ENCODE measurements at regions of chr5 and their contacts with region 1.

Region 1: GRCh38 chr5:151659001-151659754 is 27.5 kb downstream of the SPARC start:
- H3K4me3 ChIP-seq: no peak overlapping the region
- H3K27ac ChIP-seq: no peak overlapping the region
- H3K4me1 ChIP-seq: no peaks in the 10 kb centered on the region
- CTCF ChIP-seq: peak; percentile 76

Region 2: DNA sequence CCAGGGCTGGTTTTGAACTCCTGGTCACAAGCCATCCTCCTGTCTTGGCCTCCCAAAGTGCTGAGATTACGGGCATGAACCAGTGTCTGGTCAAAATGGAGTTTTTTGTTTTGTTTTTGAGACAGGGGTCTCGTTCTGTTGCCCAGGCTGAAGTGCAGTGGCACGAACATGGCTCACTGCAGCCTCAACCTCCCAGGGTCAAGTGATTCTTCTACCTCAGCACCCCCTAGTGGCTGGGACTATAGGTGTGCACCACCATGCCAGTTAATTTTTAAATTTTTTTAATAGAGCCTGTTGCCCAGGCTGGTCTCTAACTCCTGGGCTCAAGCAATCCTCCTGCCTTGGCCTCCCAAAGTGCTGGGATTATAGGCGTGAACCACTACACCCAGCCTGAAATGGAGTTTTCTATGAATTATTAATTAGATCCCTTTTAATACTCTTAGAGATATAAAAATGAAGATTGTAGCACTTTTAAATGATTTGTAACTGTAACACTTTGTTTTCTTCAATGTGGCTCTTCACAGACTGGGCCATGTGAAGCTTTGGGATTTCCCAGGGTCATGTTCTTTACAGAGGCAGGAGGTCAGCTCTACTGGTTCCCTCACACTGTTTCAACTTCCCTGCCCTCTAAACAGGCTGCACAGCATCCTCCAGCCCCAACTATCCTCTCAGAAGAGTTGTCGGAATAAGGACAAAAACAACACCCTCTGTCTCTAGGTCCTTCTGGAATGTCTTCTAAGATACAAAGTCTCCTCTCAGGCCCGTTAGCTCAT is 60.2 kb after region 1 on chr5:
- CTCF ChIA-PET with region 1: interaction called, 103 read pairs
- POLR2A ChIA-PET with region 1: interaction called, 3 read pairs
- H3K4me3 ChIP-seq: no peak overlapping the region
- H3K27ac ChIP-seq: no peak overlapping the region
- H3K4me1 ChIP-seq: no peaks in the 10 kb centered on the region
- CTCF ChIP-seq: peak; percentile 22; the same call in 1 of the 2 replicates

Region 3: DNA sequence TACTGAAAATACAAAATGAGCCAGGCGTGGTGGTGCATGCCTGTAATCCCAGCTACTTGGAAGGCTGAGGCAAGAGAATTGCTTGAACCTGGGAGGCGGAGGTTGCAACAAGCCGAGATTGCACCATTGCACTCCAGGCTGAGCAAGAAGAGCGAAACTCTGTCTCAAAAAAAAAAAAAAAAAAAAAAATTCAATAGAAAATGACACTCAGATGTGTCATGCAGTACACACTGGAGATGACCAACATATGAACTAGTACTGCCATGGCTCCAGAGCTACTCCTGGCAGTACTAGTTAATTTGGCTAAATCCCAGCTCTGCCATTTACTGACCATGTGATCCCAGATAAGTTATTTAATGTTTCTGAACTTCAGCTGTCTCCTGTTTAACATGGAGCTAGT is 91.9 kb after region 1 on chr5:
- CTCF ChIA-PET with region 1: interaction called, 10 read pairs
- POLR2A ChIA-PET with region 1: no interaction called
- H3K4me3 ChIP-seq: no peak overlapping the region
- H3K27ac ChIP-seq: no peak overlapping the region
- H3K4me1 ChIP-seq: peaks cover 4% of the 10 kb centered on the region
- CTCF ChIP-seq: no peak

Measured in HEK293 (cell line).